Mammary epithelial cell (primary cell): ENCODE measurements at regions of chr9 and their contacts with region 1.

Region 1: GRCh38 chr9:83334320-83334719 is 203.9 kb downstream of the FRMD3 start:
- DNase-seq: peak; percentile 56
- H3K4me3 ChIP-seq: no peak overlapping the region
- H3K27ac ChIP-seq: no peak overlapping the region
- H3K4me1 ChIP-seq: no peaks in the 10 kb centered on the region
- H3K27me3 ChIP-seq: no peaks in the 10 kb centered on the region
- CTCF ChIP-seq: peak; percentile 82 to 93

Region 2: GRCh38 chr9:83166369-83166768 is 168.0 kb before region 1 on chr9:
- CTCF ChIA-PET with region 1: no interaction called
- dilution Hi-C with region 1: no loop called
- in situ Hi-C with region 1: no loop called
- intact Hi-C with region 1: loop called (anchors 2 kb)
- DNase-seq: peak; percentile 35
- H3K4me3 ChIP-seq: no peak overlapping the region
- H3K27ac ChIP-seq: no peak overlapping the region
- H3K4me1 ChIP-seq: peaks cover 14% of the 10 kb centered on the region
- H3K27me3 ChIP-seq: no peaks in the 10 kb centered on the region
- CTCF ChIP-seq: no peak

Region 3: GRCh38 chr9:83219152-83219923 is 115.0 kb before region 1 on chr9:
- CTCF ChIA-PET with region 1: no interaction called
- dilution Hi-C with region 1: no loop called
- in situ Hi-C with region 1: no loop called
- intact Hi-C with region 1: loop called (anchors 5 kb)
- DNase-seq: peak; percentile 72
- H3K4me3 ChIP-seq: peak overlapping the region; percentile 45 to 86 (median 62)
- H3K27ac ChIP-seq: peak overlapping the region; percentile 60
- H3K4me1 ChIP-seq: peaks cover 23% of the 10 kb centered on the region
- H3K27me3 ChIP-seq: no peaks in the 10 kb centered on the region
- CTCF ChIP-seq: peak; percentile 32 to 71

Region 4: GRCh38 chr9:83280790-83281189 is 53.5 kb before region 1 on chr9:
- CTCF ChIA-PET with region 1: interaction called, 18 read pairs
- dilution Hi-C with region 1: no loop called
- in situ Hi-C with region 1: no loop called
- intact Hi-C with region 1: no loop called
- DNase-seq: no peak
- H3K4me3 ChIP-seq: no peak overlapping the region
- H3K27ac ChIP-seq: no peak overlapping the region
- H3K4me1 ChIP-seq: peaks cover 23% of the 10 kb centered on the region
- H3K27me3 ChIP-seq: no peaks in the 10 kb centered on the region
- CTCF ChIP-seq: no peak

Region 5: DNA sequence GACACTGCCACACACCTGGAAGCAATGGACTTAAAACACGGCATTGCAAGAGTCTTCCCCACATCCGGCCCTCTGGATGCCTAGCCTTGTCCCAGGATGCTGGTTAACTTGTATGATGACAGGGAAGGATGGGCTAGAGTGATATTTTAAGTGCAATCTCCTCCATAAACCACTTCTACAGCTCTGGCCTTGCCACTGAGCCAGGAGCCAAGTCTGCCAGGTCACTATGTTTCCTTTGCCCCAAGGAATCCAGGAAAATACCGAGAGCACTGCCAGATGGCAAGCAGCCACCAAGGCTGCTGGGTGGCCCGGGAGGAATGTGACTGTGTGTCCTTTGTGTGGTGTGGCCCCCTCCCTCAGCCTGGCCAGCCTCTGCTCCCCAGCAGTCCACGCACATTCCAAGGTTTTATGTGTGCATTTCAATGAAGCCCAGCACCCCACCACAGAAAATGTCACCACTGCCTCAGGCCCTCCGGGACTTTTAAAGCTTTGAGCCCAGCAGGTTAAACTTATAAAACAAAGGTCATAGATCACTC is 97.9 kb after region 1 on chr9:
- CTCF ChIA-PET with region 1: no interaction called
- dilution Hi-C with region 1: no loop called
- in situ Hi-C with region 1: no loop called
- intact Hi-C with region 1: no loop called
- DNase-seq: no peak
- H3K4me3 ChIP-seq: no peak overlapping the region
- H3K27ac ChIP-seq: no peak overlapping the region
- H3K4me1 ChIP-seq: no peaks in the 10 kb centered on the region
- H3K27me3 ChIP-seq: no peaks in the 10 kb centered on the region
- CTCF ChIP-seq: no peak

Region 6: DNA sequence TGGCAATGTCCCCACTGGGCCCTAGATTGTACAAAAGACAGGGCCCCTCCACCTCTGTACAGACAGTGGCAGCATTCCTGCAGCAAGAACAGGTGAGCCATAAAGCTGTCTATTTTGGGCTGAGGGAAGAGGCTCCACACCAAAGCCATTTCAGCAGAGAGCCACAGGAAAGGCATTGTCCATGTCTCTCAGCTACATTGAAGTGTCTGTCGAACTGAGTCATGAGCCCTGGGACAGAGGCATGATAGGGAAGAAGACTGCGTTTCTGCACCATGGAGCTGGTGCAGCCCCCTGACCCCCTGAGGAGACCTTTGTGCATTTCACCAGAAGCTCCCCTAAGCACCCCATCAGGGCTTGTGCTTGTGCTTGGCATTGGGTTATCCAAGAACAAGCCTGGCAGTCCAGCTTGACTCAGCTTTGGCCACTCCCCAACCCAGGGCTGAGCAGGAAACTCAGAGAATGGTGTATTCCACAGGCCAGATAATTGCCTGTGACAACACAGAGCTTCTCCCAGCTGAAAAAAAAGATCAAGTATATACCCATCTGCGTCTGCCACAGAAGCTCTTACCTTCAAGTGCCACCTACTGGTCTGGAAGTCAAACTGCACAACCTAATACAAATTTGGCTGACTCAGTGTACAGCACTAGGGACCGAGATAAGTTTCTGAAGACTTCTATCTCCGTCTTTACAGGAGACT is 209.8 kb after region 1 on chr9:
- CTCF ChIA-PET with region 1: interaction called, 4 read pairs
- dilution Hi-C with region 1: no loop called
- in situ Hi-C with region 1: loop called in 1 of 2 experiments (anchors 10 kb)
- intact Hi-C with region 1: loop called (anchors 1 kb)
- DNase-seq: peak; percentile 68
- H3K4me3 ChIP-seq: no peak overlapping the region
- H3K27ac ChIP-seq: no peak overlapping the region
- H3K4me1 ChIP-seq: no peaks in the 10 kb centered on the region
- H3K27me3 ChIP-seq: no peaks in the 10 kb centered on the region
- CTCF ChIP-seq: peak; percentile 72 to 83

Region 7: DNA sequence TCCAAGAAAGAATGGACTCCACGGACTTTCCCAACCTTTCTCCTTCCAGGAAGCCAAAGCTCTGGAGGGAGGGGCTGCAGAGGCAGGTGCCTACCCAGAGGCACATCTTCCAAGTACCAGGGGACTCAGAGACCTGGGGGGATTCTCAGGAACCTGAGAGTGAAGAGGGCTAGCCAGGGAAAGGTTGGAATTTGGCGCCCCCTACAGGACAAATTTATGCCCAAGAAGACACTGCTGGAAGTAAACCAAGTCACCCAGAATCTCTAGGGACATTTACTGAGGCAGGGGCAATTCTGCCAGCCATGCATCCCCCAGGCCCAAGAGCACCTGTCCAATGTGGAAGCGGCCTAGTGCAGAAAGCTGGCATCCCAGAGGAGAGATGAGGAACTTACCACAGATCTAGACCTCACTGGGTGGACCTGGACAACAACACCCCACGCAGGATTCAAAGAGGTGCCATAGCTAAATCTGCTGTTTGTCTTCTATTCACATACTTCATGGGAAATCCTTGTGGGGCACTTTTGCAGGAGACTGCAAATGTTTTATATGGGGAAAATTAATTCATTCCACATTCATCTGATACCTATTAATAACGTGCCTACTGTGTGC is 262.7 kb after region 1 on chr9:
- CTCF ChIA-PET with region 1: no interaction called
- dilution Hi-C with region 1: no loop called
- in situ Hi-C with region 1: no loop called
- intact Hi-C with region 1: loop called (anchors 1 kb)
- DNase-seq: peak; percentile 15
- H3K4me3 ChIP-seq: no peak overlapping the region
- H3K27ac ChIP-seq: no peak overlapping the region
- H3K4me1 ChIP-seq: no peaks in the 10 kb centered on the region
- H3K27me3 ChIP-seq: no peaks in the 10 kb centered on the region
- CTCF ChIP-seq: peak; percentile 58 to 67

Region 8: DNA sequence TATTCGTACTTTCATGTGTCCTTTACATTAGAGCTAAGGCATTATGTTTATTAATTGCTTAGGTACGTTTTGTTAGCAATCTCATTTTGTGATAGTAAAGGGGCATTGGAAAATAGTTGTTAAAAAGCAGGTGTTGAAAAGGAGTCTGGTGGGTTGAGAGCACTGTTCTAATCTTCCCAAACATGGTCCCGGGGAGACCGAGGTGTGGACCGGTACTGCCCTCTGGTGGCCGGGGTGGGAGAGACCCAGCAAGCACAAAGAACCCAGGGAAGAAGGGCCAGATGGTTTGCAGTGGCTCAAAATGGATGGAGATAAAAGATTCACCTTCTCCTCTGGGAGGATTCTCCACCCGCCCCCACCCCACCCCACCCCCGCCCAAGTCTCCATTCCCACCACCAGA is 314.8 kb after region 1 on chr9:
- CTCF ChIA-PET with region 1: interaction called, 3 read pairs
- dilution Hi-C with region 1: no loop called
- in situ Hi-C with region 1: no loop called
- intact Hi-C with region 1: loop called (anchors 5 kb)
- DNase-seq: peak; percentile 28
- H3K4me3 ChIP-seq: no peak overlapping the region
- H3K27ac ChIP-seq: no peak overlapping the region
- H3K4me1 ChIP-seq: no peaks in the 10 kb centered on the region
- H3K27me3 ChIP-seq: no peaks in the 10 kb centered on the region
- CTCF ChIP-seq: peak; percentile 81 to 85